CD8-positive, alpha-beta T cell (primary cell): ENCODE measurements at regions of chr5 and their contacts with region 1.

Region 1: DNA sequence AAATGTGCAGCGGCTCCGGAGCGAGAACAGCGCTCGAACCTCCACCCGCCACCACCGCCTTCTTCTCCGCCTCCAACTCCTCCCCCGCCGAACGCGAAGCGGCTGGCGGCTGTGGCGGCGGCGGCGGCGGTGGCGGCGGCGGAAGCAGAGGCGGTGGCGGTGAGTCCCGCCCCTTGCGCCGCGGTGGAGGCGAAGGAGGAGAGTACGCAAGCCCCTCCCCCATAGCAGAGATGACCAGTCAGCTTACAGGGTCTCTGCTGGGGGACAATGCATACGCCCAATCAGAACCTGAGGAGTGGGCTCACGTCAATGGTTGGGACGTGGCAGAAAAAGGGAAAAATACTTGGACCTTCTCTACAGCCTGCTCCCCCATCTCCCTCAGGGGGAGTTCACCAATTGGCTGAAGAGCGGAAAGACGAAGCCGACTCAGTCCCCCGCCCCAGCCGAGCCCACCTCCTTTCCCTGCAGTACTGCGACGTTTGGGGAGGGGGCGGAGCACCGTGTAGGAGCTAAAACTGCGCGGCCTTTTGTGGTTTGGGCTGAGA is at the start of gene PJA2:
- DNase-seq: peak; percentile 89 to 99 (median 96)
- ATAC-seq: peak; percentile 76
- H3K4me3 ChIP-seq: peak within 1 kb of the TSS; percentile 73 to 88
- H3K4me3 Mint-ChIP-seq: peak within 1 kb of the TSS; percentile 98
- H3K27ac ChIP-seq: peak within 1 kb of the TSS; percentile 90 to 98
- H3K27ac Mint-ChIP-seq: peak within 1 kb of the TSS; percentile 97
- H3K4me1 ChIP-seq: peaks cover 19% of the 10 kb centered on the region
- H3K4me1 Mint-ChIP-seq: peaks cover 47% of the 10 kb centered on the region
- H3K27me3 ChIP-seq: no peaks in the 10 kb centered on the region
- H3K27me3 Mint-ChIP-seq: no peaks in the 10 kb centered on the region
- CTCF ChIP-seq: peak; percentile 39
- total RNA-seq, gene PJA2: 89.3 to 94.4 TPM

Region 2: GRCh38 chr5:108381954-108382783 is 1027.7 kb before region 1 on chr5 and contains the start of gene FBXL17:
- CTCF ChIA-PET with region 1: no interaction called
- POLR2A ChIA-PET with region 1: interaction called, 12 read pairs
- intact Hi-C with region 1: loop called (anchors 1 to 5 kb)
- DNase-seq: peak; percentile 83 to 97 (median 90)
- ATAC-seq: peak; percentile 75
- H3K4me3 ChIP-seq: peak within 1 kb of the TSS; percentile 59 to 63
- H3K4me3 Mint-ChIP-seq: peak within 1 kb of the TSS; percentile 94
- H3K27ac ChIP-seq: peak within 1 kb of the TSS; percentile 84 to 86
- H3K27ac Mint-ChIP-seq: peak within 1 kb of the TSS; percentile 99
- H3K4me1 ChIP-seq: peaks cover 11% of the 10 kb centered on the region
- H3K4me1 Mint-ChIP-seq: peaks cover 36% of the 10 kb centered on the region
- H3K27me3 ChIP-seq: no peaks in the 10 kb centered on the region
- H3K27me3 Mint-ChIP-seq: no peaks in the 10 kb centered on the region
- CTCF ChIP-seq: no peak
- total RNA-seq, gene FBXL17: 13.5 to 17.9 TPM

Region 3: DNA sequence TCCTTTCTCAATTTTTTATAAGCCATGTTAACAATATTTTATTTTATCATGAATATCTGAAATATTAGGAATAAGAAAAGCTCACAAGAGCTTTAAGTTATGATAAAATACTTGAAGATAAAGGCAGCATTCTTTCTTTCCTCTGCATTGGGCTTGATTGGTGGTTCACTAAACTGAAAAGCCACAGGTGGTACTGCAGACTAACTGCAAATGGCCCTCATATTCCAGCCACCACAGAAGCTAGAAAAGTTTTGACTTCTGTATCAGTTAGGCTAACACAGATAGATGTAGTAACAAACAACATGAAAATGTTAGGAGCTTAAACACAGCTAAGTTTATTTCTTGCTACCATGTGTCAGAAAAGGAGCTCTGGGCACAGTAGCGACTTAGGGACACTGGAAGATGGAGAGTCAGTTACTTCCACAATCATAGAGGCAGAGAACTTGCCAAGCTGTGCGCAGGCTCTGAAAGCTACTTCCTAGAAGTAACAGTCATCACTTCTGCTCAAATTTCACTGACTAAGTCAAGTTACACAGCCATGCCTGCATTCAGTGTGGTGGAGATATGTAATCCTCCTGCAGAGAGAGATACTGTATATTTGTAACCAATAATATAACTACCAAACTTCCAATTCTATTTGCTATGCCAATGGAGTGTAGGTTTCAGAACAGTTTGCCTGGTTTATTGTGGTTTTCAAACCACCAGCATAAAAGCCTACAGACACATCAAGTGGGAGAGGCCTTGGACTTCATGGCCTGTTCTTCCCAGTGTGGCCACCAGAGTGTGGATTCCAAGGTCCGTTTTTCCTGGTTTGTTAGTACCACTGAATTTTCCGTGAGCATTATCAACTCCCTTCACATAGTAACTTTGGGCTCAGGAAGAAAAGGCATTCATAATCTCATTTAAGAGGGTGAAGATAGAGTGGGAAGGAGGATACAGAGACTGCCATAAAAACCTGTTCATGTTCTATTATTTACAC is 268.4 kb before region 1 on chr5:
- CTCF ChIA-PET with region 1: no interaction called
- POLR2A ChIA-PET with region 1: no interaction called
- intact Hi-C with region 1: no loop called
- DNase-seq: no peak
- ATAC-seq: no peak
- H3K4me3 ChIP-seq: no peak overlapping the region
- H3K4me3 Mint-ChIP-seq: no peak overlapping the region
- H3K27ac ChIP-seq: no peak overlapping the region
- H3K27ac Mint-ChIP-seq: no peak overlapping the region
- H3K4me1 ChIP-seq: no peaks in the 10 kb centered on the region
- H3K4me1 Mint-ChIP-seq: no peaks in the 10 kb centered on the region
- H3K27me3 ChIP-seq: no peaks in the 10 kb centered on the region
- H3K27me3 Mint-ChIP-seq: no peaks in the 10 kb centered on the region
- CTCF ChIP-seq: no peak

Region 4: DNA sequence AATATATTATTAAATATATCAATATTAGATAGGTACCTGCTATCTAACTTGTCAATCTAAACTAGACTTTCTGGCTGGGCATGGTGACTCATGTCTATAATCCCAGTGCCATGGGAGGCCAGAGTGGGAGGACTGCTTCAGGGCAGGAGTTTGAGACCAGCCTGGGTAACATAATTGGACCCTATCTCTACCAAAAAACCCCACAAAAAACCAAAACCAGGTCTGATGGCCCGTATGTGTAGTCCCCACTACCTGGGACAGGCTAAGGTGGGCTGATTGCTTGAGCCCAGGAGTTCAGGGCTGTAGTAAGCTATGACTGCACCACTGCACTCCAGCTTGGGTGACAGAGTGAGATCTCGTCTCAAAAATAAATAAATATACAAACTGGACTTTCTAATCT is 55.2 kb before region 1 on chr5:
- CTCF ChIA-PET with region 1: no interaction called
- POLR2A ChIA-PET with region 1: interaction called, 10 read pairs
- intact Hi-C with region 1: loop called in 1 of 2 experiments (anchors 5 kb)
- DNase-seq: no peak
- ATAC-seq: no peak
- H3K4me3 ChIP-seq: no peak overlapping the region
- H3K4me3 Mint-ChIP-seq: no peak overlapping the region
- H3K27ac ChIP-seq: no peak overlapping the region
- H3K27ac Mint-ChIP-seq: no peak overlapping the region
- H3K4me1 ChIP-seq: no peaks in the 10 kb centered on the region
- H3K4me1 Mint-ChIP-seq: peaks cover 26% of the 10 kb centered on the region
- H3K27me3 ChIP-seq: no peaks in the 10 kb centered on the region
- H3K27me3 Mint-ChIP-seq: no peaks in the 10 kb centered on the region
- CTCF ChIP-seq: no peak

Region 5: DNA sequence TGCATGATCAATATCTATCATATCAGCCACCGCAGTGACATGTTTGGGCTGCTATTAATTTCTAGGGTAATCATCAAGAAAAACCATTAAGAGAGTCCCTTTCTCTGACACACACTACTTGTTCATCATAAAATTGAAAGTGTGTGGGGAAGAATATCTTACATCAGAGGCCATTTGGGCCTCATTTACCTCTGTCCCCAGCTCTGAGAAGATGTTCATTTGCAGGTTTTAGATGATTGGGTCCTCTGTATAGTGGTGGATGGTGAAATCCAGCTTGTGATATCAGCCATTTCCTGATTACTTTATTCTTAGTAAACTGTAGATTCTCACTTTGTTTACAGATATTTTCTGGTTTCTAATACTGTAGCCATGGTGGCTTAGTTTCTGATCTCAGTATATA is 29.7 kb after region 1 on chr5:
- CTCF ChIA-PET with region 1: interaction called, 3 read pairs
- POLR2A ChIA-PET with region 1: no interaction called
- intact Hi-C with region 1: loop called in 1 of 2 experiments (anchors 2 kb)
- DNase-seq: no peak
- ATAC-seq: no peak
- H3K4me3 ChIP-seq: no peak overlapping the region
- H3K4me3 Mint-ChIP-seq: no peak overlapping the region
- H3K27ac ChIP-seq: no peak overlapping the region
- H3K27ac Mint-ChIP-seq: no peak overlapping the region
- H3K4me1 ChIP-seq: no peaks in the 10 kb centered on the region
- H3K4me1 Mint-ChIP-seq: no peaks in the 10 kb centered on the region
- H3K27me3 ChIP-seq: no peaks in the 10 kb centered on the region
- H3K27me3 Mint-ChIP-seq: no peaks in the 10 kb centered on the region
- CTCF ChIP-seq: no peak

Region 6: DNA sequence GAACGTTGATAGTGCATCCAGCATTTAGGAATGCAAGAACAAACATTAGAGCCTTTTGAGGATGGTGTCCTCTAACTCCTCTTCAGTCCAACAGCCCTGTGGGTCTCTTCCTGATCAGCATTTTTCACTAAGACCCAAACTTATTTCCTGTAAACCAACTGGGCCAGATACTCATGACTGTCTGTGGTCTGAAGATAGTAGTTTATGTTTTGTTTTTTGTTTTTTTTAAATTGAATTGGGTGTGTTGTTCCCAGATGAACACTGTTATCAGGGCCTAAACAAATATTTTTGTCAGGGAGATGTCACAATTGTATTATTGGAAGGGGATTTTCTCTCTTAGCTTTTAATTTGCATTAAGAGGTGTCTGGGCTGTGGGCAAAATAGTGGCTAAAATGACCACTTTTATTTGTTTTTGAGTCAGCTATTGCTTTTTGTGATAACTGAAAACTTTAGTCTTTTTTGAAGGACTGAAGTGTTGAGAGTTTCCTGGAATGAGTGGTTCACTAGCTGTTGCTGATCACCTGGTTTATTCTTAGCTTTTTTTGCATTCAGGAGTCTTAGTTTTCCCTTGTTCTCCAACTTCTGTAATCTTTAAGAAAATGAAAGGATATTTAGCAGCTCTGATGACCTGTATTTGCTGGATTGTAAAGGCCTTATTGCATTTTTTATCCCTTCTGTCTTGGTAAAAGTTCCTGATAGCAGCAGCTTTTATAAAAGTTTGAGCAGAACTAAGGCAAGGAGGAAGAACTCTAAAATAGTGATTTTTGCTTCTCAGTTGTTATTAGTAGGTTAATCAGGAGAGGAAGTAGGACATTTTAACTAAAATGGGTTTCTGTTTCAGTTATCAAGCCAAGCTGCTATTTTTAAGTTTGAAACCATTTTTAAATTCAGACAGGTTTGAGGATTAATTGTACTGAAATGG is 285.4 kb after region 1 on chr5:
- CTCF ChIA-PET with region 1: no interaction called
- POLR2A ChIA-PET with region 1: interaction called, 30 read pairs
- intact Hi-C with region 1: loop called in 1 of 2 experiments (anchors 1 kb)
- DNase-seq: peak in 1 of 9 experiments; percentile 21
- ATAC-seq: no peak
- H3K4me3 ChIP-seq: no peak overlapping the region
- H3K4me3 Mint-ChIP-seq: peak overlapping the region; percentile 87
- H3K27ac ChIP-seq: peak overlapping the region in 1 of 2 experiments; percentile 47
- H3K27ac Mint-ChIP-seq: peak overlapping the region; percentile 28
- H3K4me1 ChIP-seq: peaks cover 73% of the 10 kb centered on the region
- H3K4me1 Mint-ChIP-seq: peaks cover 89% of the 10 kb centered on the region
- H3K27me3 ChIP-seq: no peaks in the 10 kb centered on the region
- H3K27me3 Mint-ChIP-seq: no peaks in the 10 kb centered on the region
- CTCF ChIP-seq: no peak

Region 7: DNA sequence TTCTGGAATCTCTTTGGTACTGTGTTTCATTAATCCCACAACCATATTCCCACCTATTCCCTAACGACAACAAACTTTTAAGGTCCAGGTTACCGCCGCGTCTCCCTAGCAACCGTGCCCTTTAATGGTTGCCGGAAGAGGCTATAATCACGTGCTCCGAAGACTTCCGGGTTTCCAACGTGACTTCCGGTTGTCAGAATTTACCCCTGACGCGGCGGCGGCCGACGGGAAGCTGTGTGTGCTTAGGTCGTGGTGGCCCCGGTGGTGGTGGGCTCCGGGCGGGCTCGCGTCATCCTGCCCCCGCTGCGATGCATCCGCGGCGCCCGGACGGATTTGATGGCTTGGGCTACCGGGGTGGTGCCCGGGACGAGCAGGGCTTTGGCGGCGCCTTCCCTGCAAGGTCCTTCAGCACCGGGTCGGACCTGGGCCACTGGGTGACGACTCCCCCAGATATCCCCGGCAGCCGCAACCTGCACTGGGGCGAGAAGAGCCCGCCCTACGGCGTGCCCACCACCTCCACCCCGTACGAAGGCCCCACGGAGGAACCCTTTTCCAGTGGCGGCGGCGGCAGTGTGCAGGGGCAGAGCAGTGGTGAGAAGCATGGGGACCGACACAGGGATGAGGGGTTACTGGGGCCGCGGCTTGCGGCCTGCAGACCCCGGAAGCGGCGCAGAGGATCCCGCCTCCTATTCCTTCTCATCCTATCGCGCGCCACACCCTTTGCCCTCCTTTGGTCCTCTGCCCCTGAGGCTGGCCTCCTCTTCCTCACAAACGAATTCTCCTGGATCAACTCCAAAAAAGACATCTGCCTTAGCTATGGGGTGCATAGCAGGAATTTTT is 1329.1 kb after region 1 on chr5 and contains the start of gene SLC25A46:
- CTCF ChIA-PET with region 1: no interaction called
- POLR2A ChIA-PET with region 1: interaction called, 4 read pairs
- intact Hi-C with region 1: loop called (anchors 1 to 5 kb)
- DNase-seq: peak; percentile 76 to 96 (median 88)
- ATAC-seq: peak; percentile 79
- H3K4me3 ChIP-seq: peak within 1 kb of the TSS; percentile 69 to 91
- H3K4me3 Mint-ChIP-seq: peak within 1 kb of the TSS; percentile 96
- H3K27ac ChIP-seq: peak within 1 kb of the TSS; percentile 88 to 97
- H3K27ac Mint-ChIP-seq: peak within 1 kb of the TSS; percentile 97
- H3K4me1 ChIP-seq: peaks cover 15% of the 10 kb centered on the region
- H3K4me1 Mint-ChIP-seq: peaks cover 34% of the 10 kb centered on the region
- H3K27me3 ChIP-seq: no peaks in the 10 kb centered on the region
- H3K27me3 Mint-ChIP-seq: no peaks in the 10 kb centered on the region
- CTCF ChIP-seq: no peak
- total RNA-seq, gene SLC25A46: 13.6 to 14.6 TPM